B cell (primary cell): ENCODE measurements at regions of chr9 and their contacts with region 1.

Region 1: DNA sequence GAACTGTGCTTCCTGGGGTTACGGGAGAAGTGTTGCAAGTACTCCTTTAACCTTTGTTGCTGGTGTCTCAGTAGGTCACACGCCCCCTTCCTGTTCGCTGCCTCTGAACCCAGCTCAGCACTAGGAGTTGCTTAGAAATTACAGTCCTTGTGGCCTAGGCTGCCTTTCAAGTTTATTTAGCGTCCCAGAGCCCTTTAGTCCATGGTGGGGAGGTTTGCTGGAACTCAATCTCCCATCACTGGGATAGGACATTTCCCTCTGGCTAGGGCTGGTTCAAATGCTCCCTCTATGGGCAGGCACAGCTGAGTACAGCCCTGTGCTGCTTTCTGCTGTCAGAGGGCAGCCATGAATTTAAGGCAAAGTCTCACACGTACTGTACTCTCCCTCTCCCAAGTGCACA is 4.7 kb downstream of the IFNA8 start:
- DNase-seq: no peak
- ATAC-seq: no peak
- H3K4me3 ChIP-seq: no peak overlapping the region
- H3K4me3 Mint-ChIP-seq: no peak overlapping the region
- H3K27ac ChIP-seq: no peak overlapping the region
- H3K27ac Mint-ChIP-seq: no peak overlapping the region
- H3K4me1 ChIP-seq: peaks cover 21 to 30% of the 10 kb centered on the region in 2 donors
- H3K4me1 Mint-ChIP-seq: peaks cover 29% of the 10 kb centered on the region
- H3K27me3 ChIP-seq: peaks cover 0 to 36% (median 18%) of the 10 kb centered on the region in 4 experiments
- H3K27me3 Mint-ChIP-seq: peaks cover 50% of the 10 kb centered on the region
- CTCF ChIP-seq: no peak

Region 2: DNA sequence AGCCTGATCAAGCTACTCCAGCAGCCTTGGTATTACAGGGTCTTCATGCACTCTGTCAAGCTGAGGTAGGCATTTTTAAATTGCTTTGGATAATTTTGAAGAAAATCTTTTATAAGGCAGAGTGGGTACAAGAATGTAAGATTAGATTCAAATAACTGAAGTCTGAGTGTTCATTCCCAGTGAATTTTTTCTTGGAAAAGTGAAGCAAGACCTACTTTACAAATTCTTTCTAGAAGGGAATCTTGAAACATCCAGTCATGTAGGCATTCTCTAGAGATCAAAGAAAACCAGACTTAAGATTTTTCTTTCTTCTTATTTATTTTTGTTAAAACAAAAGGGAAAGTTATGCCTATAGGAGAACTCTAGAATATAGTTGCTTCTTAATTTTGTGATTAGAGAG is 590.6 kb before region 1 on chr9:
- CTCF ChIA-PET with region 1: no interaction called
- POLR2A ChIA-PET with region 1: no interaction called
- intact Hi-C with region 1: no loop called
- DNase-seq: no peak
- ATAC-seq: no peak
- H3K4me3 ChIP-seq: no peak overlapping the region
- H3K4me3 Mint-ChIP-seq: no peak overlapping the region
- H3K27ac ChIP-seq: no peak overlapping the region
- H3K27ac Mint-ChIP-seq: no peak overlapping the region
- H3K4me1 ChIP-seq: no peaks in the 10 kb centered on the region
- H3K4me1 Mint-ChIP-seq: no peaks in the 10 kb centered on the region
- H3K27me3 ChIP-seq: no peaks in the 10 kb centered on the region
- H3K27me3 Mint-ChIP-seq: no peaks in the 10 kb centered on the region
- CTCF ChIP-seq: no peak

Region 3: GRCh38 chr9:21402386-21403251 is 11.0 kb before region 1 on chr9:
- CTCF ChIA-PET with region 1: interaction called, 6 read pairs
- POLR2A ChIA-PET with region 1: no interaction called
- intact Hi-C with region 1: loop called (anchors 2 kb)
- DNase-seq: peak; percentile 38
- ATAC-seq: peak; percentile 24
- H3K4me3 ChIP-seq: peak overlapping the region in 2 of 5 experiments; percentile 14 to 35
- H3K4me3 Mint-ChIP-seq: peak overlapping the region; percentile 58
- H3K27ac ChIP-seq: no peak overlapping the region
- H3K27ac Mint-ChIP-seq: no peak overlapping the region
- H3K4me1 ChIP-seq: peaks cover 9 to 14% of the 10 kb centered on the region in 2 donors
- H3K4me1 Mint-ChIP-seq: peaks cover 10% of the 10 kb centered on the region
- H3K27me3 ChIP-seq: peaks cover 1 to 41% (median 33%) of the 10 kb centered on the region in 4 experiments
- H3K27me3 Mint-ChIP-seq: peaks cover 64% of the 10 kb centered on the region
- CTCF ChIP-seq: no peak

Region 4: DNA sequence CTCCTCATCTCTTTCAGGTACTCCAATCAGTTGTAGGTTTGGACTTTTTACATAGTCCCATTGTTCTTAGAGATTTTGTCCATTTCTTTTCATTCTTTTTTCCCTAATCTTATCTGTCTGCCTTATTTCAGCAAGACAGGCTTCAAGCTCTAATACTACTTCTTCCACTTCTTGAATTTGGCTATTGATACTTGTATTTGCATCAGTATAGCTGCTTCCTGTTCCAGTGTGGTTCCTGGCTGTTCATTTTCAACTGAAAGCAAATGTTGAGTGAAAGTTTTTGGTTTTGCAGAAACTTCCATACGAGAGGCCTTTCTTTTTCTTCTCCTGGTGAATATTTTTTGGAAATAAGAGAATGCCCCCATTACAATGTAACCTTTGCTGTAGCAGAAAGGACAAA is 14.6 kb after region 1 on chr9:
- CTCF ChIA-PET with region 1: interaction called, 4 read pairs
- POLR2A ChIA-PET with region 1: no interaction called
- intact Hi-C with region 1: loop called (anchors 2 kb)
- DNase-seq: no peak
- ATAC-seq: no peak
- H3K4me3 ChIP-seq: no peak overlapping the region
- H3K4me3 Mint-ChIP-seq: no peak overlapping the region
- H3K27ac ChIP-seq: no peak overlapping the region
- H3K27ac Mint-ChIP-seq: no peak overlapping the region
- H3K4me1 ChIP-seq: peaks cover 12 to 18% of the 10 kb centered on the region in 2 donors
- H3K4me1 Mint-ChIP-seq: peaks cover 17% of the 10 kb centered on the region
- H3K27me3 ChIP-seq: peaks cover 0 to 52% (median 33%) of the 10 kb centered on the region in 4 experiments
- H3K27me3 Mint-ChIP-seq: peaks cover 80% of the 10 kb centered on the region
- CTCF ChIP-seq: no peak

Region 5: GRCh38 chr9:21443849-21444625 is 30.4 kb after region 1 on chr9:
- CTCF ChIA-PET with region 1: no interaction called
- POLR2A ChIA-PET with region 1: interaction called, 7 read pairs
- intact Hi-C with region 1: loop called (anchors 1 kb)
- DNase-seq: peak; percentile 88
- ATAC-seq: peak; percentile 92
- H3K4me3 ChIP-seq: no peak overlapping the region
- H3K4me3 Mint-ChIP-seq: peak overlapping the region; percentile 27
- H3K27ac ChIP-seq: peak overlapping the region in 1 of 2 donors; percentile 53
- H3K27ac Mint-ChIP-seq: peak overlapping the region; percentile 5
- H3K4me1 ChIP-seq: peaks cover 12 to 14% of the 10 kb centered on the region in 2 donors
- H3K4me1 Mint-ChIP-seq: peaks cover 13% of the 10 kb centered on the region
- H3K27me3 ChIP-seq: peaks cover 0 to 12% (median 3%) of the 10 kb centered on the region in 4 experiments
- H3K27me3 Mint-ChIP-seq: peaks cover 17% of the 10 kb centered on the region
- CTCF ChIP-seq: no peak